ENCODE measurements at regions of chr14 and their contacts with region 1.

Region 1: GRCh38 chr14:61252369-61253063 is 28.6 kb downstream of the TMEM30B start:
- DNase-seq: peak; percentile 67 to 84 (median 77)
- ATAC-seq: peak; percentile 96
- H3K4me3 ChIP-seq: no peak overlapping the region
- H3K27ac ChIP-seq: no peak overlapping the region
- H3K4me1 ChIP-seq: no peaks in the 10 kb centered on the region
- H3K27me3 ChIP-seq: no peaks in the 10 kb centered on the region

Region 2: DNA sequence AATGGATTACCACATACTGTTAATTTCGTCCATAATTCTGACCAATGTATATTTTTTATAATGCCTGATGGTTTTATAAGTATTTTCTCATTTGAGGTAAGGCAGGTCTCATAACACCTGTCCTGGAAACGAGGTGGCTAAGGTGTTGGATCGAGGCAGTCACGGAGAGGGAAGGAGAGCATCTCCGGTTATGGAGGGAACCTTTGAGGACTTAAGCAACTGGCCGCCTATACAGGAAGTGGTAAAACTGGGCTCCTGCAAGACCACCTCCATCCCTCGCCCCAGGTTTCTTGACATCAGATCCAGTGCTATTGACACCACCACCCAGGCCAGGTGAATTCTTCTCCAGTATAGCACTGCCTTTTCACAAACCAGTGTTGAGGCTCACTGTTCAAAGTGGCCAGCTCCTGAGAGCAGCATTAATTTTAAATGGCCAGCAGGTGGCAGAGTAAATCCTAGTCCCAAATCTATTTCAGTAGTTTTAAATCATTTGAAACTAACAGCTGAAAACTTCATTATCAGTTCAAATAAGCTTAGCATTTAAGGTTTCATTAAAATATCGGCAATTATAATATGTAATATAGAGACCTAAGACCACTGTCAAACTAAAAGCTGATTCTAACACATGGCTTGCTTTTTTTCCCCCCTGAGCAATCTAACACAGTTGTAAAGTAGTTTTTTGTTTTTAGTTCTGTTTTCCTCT is 902.7 kb before region 1 on chr14:
- intact Hi-C with region 1: loop called in 1 of 4 experiments (anchors 10 kb)
- DNase-seq: peak in 1 of 3 donors; percentile 35
- ATAC-seq: peak; percentile 51 to 68
- H3K4me3 ChIP-seq: no peak overlapping the region
- H3K27ac ChIP-seq: no peak overlapping the region
- H3K4me1 ChIP-seq: no peaks in the 10 kb centered on the region
- H3K27me3 ChIP-seq: no peaks in the 10 kb centered on the region

Region 3: GRCh38 chr14:60622917-60623257 is 629.6 kb before region 1 on chr14:
- intact Hi-C with region 1: loop called (anchors 2 to 10 kb)
- DNase-seq: no peak
- ATAC-seq: peak in 1 of 2 donors; percentile 77
- H3K4me3 ChIP-seq: no peak overlapping the region
- H3K27ac ChIP-seq: no peak overlapping the region
- H3K4me1 ChIP-seq: no peaks in the 10 kb centered on the region
- H3K27me3 ChIP-seq: no peaks in the 10 kb centered on the region

Region 4: GRCh38 chr14:60632777-60633176 is 619.7 kb before region 1 on chr14:
- intact Hi-C with region 1: loop called (anchors 2 to 10 kb)
- DNase-seq: no peak
- ATAC-seq: no peak
- H3K4me3 ChIP-seq: no peak overlapping the region
- H3K27ac ChIP-seq: no peak overlapping the region
- H3K4me1 ChIP-seq: no peaks in the 10 kb centered on the region
- H3K27me3 ChIP-seq: peaks cover 6% of the 10 kb centered on the region

Region 5: DNA sequence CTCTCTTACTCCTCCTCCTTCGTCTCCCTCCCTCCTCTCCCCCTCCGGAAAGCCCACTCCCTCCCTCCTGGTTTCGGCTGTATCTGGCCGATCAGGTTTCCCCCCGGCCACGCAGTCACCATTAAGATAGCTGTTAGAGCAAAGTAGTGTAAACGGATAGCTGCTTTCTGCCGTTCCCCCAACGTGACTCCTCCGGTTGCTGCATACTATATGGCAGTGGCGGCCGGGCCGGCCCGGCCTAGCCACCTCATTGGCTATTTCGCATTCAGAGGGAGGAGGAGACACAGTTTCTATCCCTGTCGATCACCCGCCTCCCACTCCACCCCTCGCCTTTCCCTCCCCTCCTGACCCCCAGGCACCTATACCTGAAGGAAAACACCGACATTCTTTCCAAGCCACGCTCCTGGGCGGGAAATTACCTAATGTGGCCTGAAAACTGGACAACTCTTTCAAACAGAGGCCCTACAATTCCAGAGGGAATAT is 528.3 kb before region 1 on chr14 and contains the start of gene SIX4:
- intact Hi-C with region 1: loop called in 1 of 4 experiments (anchors 10 kb)
- DNase-seq: peak; percentile 62 to 79 (median 79)
- ATAC-seq: peak; percentile 92 to 93
- H3K4me3 ChIP-seq: peak within 1 kb of the TSS; percentile 62
- H3K27ac ChIP-seq: peak within 1 kb of the TSS; percentile 43
- H3K4me1 ChIP-seq: no peaks in the 10 kb centered on the region
- H3K27me3 ChIP-seq: no peaks in the 10 kb centered on the region
- total RNA-seq, gene SIX4: 2.1 to 4.1 (median 3.4) TPM

Region 6: DNA sequence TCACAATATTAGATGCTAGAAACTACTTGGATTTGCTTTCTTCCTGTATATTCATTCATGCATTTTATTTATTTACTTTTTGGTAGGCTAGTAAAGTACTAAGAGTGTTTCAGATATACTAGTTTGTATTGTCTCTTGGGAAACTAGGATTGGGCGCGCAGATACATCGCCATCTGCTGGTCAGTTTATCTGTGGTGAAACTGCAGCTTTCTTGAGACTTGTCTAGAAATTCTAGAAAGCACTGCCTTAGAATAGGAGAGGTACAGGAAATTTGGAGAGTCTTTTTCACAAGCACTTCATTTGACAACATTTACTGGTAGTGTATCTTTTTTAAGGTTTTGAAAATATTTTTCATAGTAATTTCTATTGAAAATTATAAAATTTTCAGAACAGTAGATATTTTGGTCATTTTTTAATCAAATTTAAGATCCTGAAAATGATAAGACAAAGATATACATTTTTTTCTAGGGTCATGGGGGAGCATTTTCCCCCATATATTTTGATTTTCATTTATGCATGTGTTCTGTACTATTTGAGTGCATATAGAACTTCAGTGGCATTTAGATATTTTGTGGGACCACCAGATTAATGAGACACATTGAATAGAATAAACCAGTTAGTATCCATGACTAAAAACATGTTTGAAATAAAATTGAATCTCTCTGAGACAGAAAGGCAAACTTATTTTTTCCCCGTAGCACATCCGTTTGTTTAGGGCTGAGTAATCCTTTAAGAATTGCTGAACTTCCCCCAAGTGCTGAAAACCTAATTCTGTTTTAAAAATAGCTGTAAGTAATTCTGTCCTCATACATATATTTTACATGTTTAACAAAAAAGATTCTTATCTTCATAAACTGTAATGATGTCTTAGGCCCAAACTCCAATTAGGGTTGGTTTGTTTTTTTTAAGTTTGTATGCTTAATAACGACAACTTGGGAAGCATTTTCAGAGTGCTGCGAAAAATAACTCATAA is 227.0 kb before region 1 on chr14:
- intact Hi-C with region 1: loop called in 1 of 4 experiments (anchors 10 kb)
- DNase-seq: peak; percentile 26 to 69 (median 54)
- ATAC-seq: peak; percentile 41 to 59
- H3K4me3 ChIP-seq: no peak overlapping the region
- H3K27ac ChIP-seq: no peak overlapping the region
- H3K4me1 ChIP-seq: no peaks in the 10 kb centered on the region
- H3K27me3 ChIP-seq: no peaks in the 10 kb centered on the region

Region 7: GRCh38 chr14:61889914-61890351 is 637.4 kb after region 1 on chr14:
- intact Hi-C with region 1: no loop called
- DNase-seq: no peak
- ATAC-seq: no peak
- H3K4me3 ChIP-seq: no peak overlapping the region
- H3K27ac ChIP-seq: no peak overlapping the region
- H3K4me1 ChIP-seq: no peaks in the 10 kb centered on the region
- H3K27me3 ChIP-seq: no peaks in the 10 kb centered on the region